ENCODE measurements at regions of chr12 and their contacts with region 1.

Region 1: GRCh38 chr12:54998958-54999510 is 14.5 kb upstream of the TESPA1 start:
- DNase-seq: no peak
- ATAC-seq: no peak
- H3K4me3 ChIP-seq: no peak overlapping the region
- H3K27ac ChIP-seq: no peak overlapping the region
- H3K4me1 ChIP-seq: no peaks in the 10 kb centered on the region
- H3K27me3 ChIP-seq: peaks cover 0 to 5% of the 10 kb centered on the region in 2 donors
- CTCF ChIP-seq: no peak

Region 2: DNA sequence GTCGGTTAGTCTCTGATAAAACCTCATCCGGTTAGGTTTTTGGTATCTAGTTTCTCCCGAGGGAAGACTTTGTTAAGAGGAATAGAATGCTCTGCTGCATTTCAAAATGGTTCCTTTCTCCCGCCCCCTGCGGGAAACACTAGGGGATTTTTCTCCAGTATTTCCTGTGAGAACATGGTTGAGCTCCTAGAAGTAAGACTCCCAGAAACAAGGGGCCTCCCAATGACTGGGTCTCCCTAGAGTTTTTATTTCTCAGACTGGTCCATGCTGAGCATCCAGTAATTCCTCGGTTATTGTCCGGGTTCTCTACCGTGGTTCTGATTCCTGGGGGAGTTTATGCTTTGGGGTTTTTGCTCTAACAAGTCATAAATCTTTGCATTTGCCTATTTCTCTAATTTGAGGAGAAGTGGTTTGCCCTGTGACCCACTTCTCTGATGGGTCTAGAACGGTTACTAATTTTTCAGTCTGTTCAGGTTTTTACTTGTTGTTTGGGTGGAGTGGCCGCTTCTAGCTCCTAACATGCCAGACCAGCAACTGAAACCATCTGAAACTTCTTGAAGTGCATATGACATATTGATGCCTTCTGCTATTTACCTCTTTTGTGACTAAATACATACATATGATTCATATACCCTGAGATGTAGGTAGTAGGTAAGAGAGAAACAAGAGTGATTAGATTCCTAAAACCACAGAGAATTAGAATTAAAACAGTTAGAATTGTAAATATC is 39.6 kb before region 1 on chr12:
- intact Hi-C with region 1: no loop called
- DNase-seq: no peak
- ATAC-seq: no peak
- H3K4me3 ChIP-seq: no peak overlapping the region
- H3K27ac ChIP-seq: no peak overlapping the region
- H3K4me1 ChIP-seq: peaks cover 0 to 23% of the 10 kb centered on the region in 2 donors
- H3K27me3 ChIP-seq: no peaks in the 10 kb centered on the region
- CTCF ChIP-seq: no peak

Region 3: DNA sequence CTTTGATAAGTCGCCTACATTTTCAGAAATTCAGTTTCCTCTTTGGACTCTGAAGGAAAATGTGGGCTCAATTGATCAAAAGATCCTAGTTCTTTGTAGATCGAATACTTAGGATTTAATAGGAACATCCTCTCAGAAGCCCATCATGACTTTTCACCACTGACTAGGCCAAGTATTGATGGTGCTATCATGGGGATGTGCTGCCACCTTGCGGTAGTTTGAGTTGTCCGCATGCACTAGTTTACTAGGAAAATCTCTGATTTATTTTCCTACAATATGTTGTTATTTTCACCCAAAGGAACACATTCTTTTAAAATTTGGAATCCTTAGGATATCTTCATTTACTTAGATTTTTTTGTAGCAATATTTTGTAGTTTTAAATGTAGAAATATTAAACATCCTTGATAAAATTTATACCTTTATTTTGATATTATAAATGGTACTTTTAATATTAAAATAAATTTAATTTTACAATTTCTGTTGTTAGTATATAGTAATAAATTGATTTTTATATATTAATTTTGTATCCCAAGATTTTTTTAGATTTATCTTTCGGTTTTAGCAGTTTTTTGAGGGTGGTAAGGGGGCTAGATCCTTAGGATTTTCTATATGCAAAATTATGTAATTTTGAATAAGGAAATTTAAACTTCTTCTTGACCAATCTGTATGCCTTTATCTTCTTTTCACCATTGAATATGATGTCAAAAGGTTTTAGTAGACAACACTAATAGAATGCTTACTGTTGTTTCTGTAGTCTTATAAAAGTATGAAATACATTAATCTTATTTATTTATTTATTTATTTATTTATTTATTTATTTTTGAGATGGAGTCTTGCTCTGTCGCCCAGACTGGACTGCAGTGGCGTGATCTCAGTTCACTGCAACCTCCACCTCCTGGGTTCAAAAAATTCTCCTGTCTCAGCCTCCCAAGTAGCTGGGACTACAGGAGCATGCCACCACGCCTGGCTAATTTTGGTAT is 74.3 kb after region 1 on chr12:
- intact Hi-C with region 1: loop called in 1 of 2 experiments (anchors 5 kb)
- DNase-seq: peak in 3 of 4 donors; percentile 40 to 75 (median 63)
- ATAC-seq: peak; percentile 93
- H3K4me3 ChIP-seq: no peak overlapping the region
- H3K27ac ChIP-seq: no peak overlapping the region
- H3K4me1 ChIP-seq: no peaks in the 10 kb centered on the region
- H3K27me3 ChIP-seq: peaks cover 0 to 20% of the 10 kb centered on the region in 2 donors
- CTCF ChIP-seq: peak; percentile 75 to 81